Natural killer cell (primary cell): ENCODE measurements at regions of chr1 and their contacts with region 1.

Region 1: GRCh38 chr1:30929135-30929889 is 20.8 kb upstream of the SDC3 start:
- DNase-seq: peak; percentile 54 to 69
- ATAC-seq: peak; percentile 93 to 94 (median 94)
- H3K4me3 ChIP-seq: no peak overlapping the region
- H3K4me3 Mint-ChIP-seq: no peak overlapping the region
- H3K27ac ChIP-seq: peak overlapping the region; percentile 50
- H3K27ac Mint-ChIP-seq: peak overlapping the region; percentile 75 to 87
- H3K4me1 ChIP-seq: peaks cover 13% of the 10 kb centered on the region
- H3K4me1 Mint-ChIP-seq: peaks cover 17 to 20% of the 10 kb centered on the region in 2 donors
- H3K27me3 ChIP-seq: no peaks in the 10 kb centered on the region
- H3K27me3 Mint-ChIP-seq: no peaks in the 10 kb centered on the region
- CTCF ChIP-seq: peak; percentile 84

Region 2: DNA sequence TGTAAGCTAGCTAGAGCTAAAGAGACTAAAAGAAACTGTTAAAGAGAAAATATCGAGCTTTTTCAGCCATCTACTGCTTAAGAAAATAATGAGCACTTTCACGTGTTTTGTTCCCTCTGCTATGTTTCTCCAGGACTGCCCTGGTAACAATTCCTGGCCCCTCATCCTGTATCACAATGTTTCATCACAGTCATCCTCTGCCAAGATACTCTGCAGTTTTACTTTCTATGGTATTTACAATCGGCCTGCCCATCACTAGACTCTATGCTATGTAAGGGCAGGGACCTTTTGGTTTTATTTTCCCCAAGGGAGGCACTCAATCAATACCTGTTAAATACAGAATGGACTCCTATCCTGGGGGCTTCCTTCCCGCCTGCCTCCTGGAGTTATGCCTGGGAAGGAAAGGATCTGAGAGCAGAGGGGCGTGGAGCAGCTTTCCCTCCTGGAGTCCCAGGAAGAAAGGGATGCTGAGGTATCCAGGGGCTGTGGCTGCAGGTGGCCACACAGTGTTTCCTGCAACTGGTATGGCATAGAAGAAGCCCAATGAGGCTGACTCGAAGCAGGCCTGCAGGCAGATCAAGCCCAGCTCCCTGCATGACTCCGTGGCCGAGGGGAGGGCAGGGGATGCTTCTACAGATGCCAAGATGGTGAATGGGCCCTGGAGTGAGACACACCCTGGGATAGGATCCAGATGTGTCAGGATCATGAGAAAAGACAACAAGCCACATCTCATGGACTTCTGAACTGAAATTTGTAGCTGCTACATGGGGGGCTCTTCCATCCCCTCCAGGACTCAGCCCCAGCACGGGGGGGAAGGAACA is 258.9 kb before region 1 on chr1:
- intact Hi-C with region 1: no loop called
- DNase-seq: no peak
- ATAC-seq: no peak
- H3K4me3 ChIP-seq: no peak overlapping the region
- H3K4me3 Mint-ChIP-seq: no peak overlapping the region
- H3K27ac ChIP-seq: no peak overlapping the region
- H3K27ac Mint-ChIP-seq: no peak overlapping the region
- H3K4me1 ChIP-seq: no peaks in the 10 kb centered on the region
- H3K4me1 Mint-ChIP-seq: no peaks in the 10 kb centered on the region
- H3K27me3 ChIP-seq: peaks cover 3% of the 10 kb centered on the region
- H3K27me3 Mint-ChIP-seq: peaks cover 14 to 25% of the 10 kb centered on the region in 2 donors
- CTCF ChIP-seq: no peak

Region 3: GRCh38 chr1:30868833-30869435 is 60.4 kb before region 1 on chr1:
- intact Hi-C with region 1: loop called (anchors 10 kb)
- DNase-seq: peak in 1 of 2 donors; percentile 22
- ATAC-seq: peak in 1 of 3 donors; percentile 85
- H3K4me3 ChIP-seq: no peak overlapping the region
- H3K4me3 Mint-ChIP-seq: peak overlapping the region; percentile 3
- H3K27ac ChIP-seq: no peak overlapping the region
- H3K27ac Mint-ChIP-seq: peak overlapping the region in 1 of 2 donors; percentile 34
- H3K4me1 ChIP-seq: peaks cover 17% of the 10 kb centered on the region
- H3K4me1 Mint-ChIP-seq: peaks cover 6 to 11% of the 10 kb centered on the region in 2 donors
- H3K27me3 ChIP-seq: peaks cover 36% of the 10 kb centered on the region
- H3K27me3 Mint-ChIP-seq: peaks cover 46 to 48% of the 10 kb centered on the region in 2 donors
- CTCF ChIP-seq: no peak